ENCODE measurements at regions of chr16 and their contacts with region 1.

Region 1: GRCh38 chr16:30922960-30923535 is 324 bp upstream of the FBXL19 start:
- DNase-seq: peak; percentile 86
- ATAC-seq: peak; percentile 68
- H3K4me3 Mint-ChIP-seq: peak overlapping the region; percentile 100
- H3K27ac Mint-ChIP-seq: peak overlapping the region; percentile 100
- H3K4me1 Mint-ChIP-seq: peaks cover 20% of the 10 kb centered on the region
- H3K27me3 Mint-ChIP-seq: no peaks in the 10 kb centered on the region
- CTCF ChIP-seq: no peak

Region 2: GRCh38 chr16:30509081-30509765 is 413.8 kb before region 1 on chr16:
- CTCF ChIA-PET with region 1: no interaction called
- POLR2A ChIA-PET with region 1: interaction called, 15 read pairs
- intact Hi-C with region 1: no loop called
- DNase-seq: no peak
- ATAC-seq: no peak
- H3K4me3 Mint-ChIP-seq: no peak overlapping the region
- H3K27ac Mint-ChIP-seq: no peak overlapping the region
- H3K4me1 Mint-ChIP-seq: no peaks in the 10 kb centered on the region
- H3K27me3 Mint-ChIP-seq: no peaks in the 10 kb centered on the region
- CTCF ChIP-seq: no peak

Region 3: DNA sequence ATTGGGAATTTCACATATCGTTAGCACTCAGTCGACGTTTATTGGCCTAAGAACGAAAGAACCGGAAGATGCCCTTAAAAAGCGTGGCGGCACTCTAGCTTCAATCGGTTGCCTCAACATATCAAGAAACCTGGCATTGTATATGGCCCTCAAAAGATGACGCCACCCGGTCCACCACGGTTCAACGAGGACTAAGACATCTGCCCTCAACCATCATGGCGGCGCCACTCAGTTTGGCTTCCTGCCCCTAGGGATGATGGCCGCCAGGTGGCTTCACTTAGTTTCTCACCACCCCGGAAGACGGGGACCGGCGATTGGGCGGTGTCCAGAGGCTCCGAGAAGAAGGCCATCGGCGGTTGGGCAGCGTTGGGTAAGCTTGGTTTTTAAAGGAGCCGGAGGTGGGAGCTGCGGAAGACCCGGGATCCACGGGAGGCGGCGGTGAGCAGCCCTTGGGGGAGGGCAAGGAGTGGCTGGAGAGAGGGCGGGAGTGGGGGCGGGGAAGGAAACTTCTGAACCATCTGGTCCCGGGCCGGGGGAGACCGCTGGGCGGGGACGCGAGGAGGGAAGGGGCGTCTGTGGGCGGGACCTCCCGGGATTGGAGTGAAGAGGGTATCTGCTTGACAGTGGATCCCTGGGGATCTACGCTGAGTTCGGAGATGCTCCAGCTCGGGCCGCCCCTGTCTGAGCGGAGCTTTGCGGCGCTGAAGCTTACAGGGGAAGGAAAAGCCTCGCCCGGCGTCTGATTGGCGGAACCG is 272.5 kb before region 1 on chr16 and contains the start of gene PRR14:
- CTCF ChIA-PET with region 1: no interaction called
- POLR2A ChIA-PET with region 1: no interaction called
- intact Hi-C with region 1: loop called (anchors 1 kb)
- DNase-seq: peak; percentile 90
- ATAC-seq: peak; percentile 72
- H3K4me3 Mint-ChIP-seq: peak within 1 kb of the TSS; percentile 96
- H3K27ac Mint-ChIP-seq: peak within 1 kb of the TSS; percentile 95
- H3K4me1 Mint-ChIP-seq: peaks cover 24% of the 10 kb centered on the region
- H3K27me3 Mint-ChIP-seq: no peaks in the 10 kb centered on the region
- CTCF ChIP-seq: no peak
- total RNA-seq, gene PRR14: 63.5 and 77.9 TPM in 2 replicates

Region 4: DNA sequence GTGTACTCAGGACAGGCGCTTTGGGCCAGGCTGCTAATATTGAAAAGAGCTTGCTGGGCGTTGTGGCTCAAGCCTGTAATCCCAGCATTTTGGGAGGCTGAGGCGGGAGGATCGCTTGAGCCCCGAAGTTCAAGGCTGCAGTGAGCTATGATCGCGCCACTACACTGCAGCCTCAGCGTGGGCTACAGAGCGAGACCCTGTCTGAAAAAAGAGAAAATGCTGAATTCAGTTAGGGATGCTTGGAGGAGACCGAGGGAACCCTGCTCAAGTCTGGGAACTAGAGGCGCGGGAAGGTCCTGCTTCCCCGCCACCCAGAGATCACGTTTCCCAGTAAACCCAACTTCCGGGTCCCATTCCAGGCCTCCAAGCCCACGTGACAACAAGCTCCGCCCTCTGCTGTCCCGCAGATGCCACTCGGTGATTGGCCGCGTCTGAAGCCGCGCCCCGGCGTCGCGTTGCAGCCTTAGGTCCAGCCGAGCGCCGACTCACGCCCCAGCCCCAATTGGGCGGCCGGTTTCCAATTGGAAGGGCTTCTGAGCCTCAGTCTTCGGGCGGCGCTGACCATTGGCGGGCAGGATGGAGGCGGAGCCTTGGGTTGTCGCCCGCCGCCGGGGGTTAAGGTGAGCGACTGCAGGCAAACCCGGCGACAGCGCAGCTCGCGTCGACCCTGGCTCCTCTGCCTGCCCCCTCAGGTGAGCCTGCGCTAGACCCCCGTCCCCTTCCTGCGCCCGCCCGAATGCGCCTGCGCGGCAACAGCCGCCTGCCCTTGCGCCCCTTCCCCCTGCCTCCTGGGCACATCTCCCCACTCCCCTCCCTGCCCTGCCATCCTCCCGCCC is 175.0 kb before region 1 on chr16 and contains the start of gene PHKG2:
- CTCF ChIA-PET with region 1: no interaction called
- POLR2A ChIA-PET with region 1: no interaction called
- intact Hi-C with region 1: loop called (anchors 1 kb)
- DNase-seq: peak; percentile 90
- ATAC-seq: peak; percentile 98
- H3K4me3 Mint-ChIP-seq: peak within 1 kb of the TSS; percentile 91
- H3K27ac Mint-ChIP-seq: peak within 1 kb of the TSS; percentile 87
- H3K4me1 Mint-ChIP-seq: peaks cover 24% of the 10 kb centered on the region
- H3K27me3 Mint-ChIP-seq: no peaks in the 10 kb centered on the region
- CTCF ChIP-seq: no peak
- total RNA-seq, gene PHKG2: 45.3 and 51.4 TPM in 2 replicates

Region 5: GRCh38 chr16:30893744-30894539 is 29.1 kb before region 1 on chr16 and contains the start of gene BCL7C:
- CTCF ChIA-PET with region 1: no interaction called
- POLR2A ChIA-PET with region 1: interaction called, 4 read pairs
- intact Hi-C with region 1: loop called (anchors 1 kb)
- DNase-seq: peak; percentile 86
- ATAC-seq: peak; percentile 76
- H3K4me3 Mint-ChIP-seq: peak within 1 kb of the TSS; percentile 84
- H3K27ac Mint-ChIP-seq: peak within 1 kb of the TSS; percentile 88
- H3K4me1 Mint-ChIP-seq: peaks cover 48% of the 10 kb centered on the region
- H3K27me3 Mint-ChIP-seq: no peaks in the 10 kb centered on the region
- CTCF ChIP-seq: no peak
- total RNA-seq, gene BCL7C: 32.2 and 35.7 TPM in 2 replicates

Region 6: GRCh38 chr16:30957456-30958174 is 34.6 kb after region 1 on chr16 and contains the start of gene SETD1A:
- CTCF ChIA-PET with region 1: no interaction called
- POLR2A ChIA-PET with region 1: interaction called, 4 read pairs
- intact Hi-C with region 1: loop called (anchors 1 kb)
- DNase-seq: peak; percentile 89
- ATAC-seq: peak; percentile 87
- H3K4me3 Mint-ChIP-seq: peak within 1 kb of the TSS; percentile 95
- H3K27ac Mint-ChIP-seq: peak within 1 kb of the TSS; percentile 99
- H3K4me1 Mint-ChIP-seq: peaks cover 31% of the 10 kb centered on the region
- H3K27me3 Mint-ChIP-seq: no peaks in the 10 kb centered on the region
- CTCF ChIP-seq: no peak
- total RNA-seq, gene SETD1A: 29.6 and 32.8 TPM in 2 replicates

Region 7: DNA sequence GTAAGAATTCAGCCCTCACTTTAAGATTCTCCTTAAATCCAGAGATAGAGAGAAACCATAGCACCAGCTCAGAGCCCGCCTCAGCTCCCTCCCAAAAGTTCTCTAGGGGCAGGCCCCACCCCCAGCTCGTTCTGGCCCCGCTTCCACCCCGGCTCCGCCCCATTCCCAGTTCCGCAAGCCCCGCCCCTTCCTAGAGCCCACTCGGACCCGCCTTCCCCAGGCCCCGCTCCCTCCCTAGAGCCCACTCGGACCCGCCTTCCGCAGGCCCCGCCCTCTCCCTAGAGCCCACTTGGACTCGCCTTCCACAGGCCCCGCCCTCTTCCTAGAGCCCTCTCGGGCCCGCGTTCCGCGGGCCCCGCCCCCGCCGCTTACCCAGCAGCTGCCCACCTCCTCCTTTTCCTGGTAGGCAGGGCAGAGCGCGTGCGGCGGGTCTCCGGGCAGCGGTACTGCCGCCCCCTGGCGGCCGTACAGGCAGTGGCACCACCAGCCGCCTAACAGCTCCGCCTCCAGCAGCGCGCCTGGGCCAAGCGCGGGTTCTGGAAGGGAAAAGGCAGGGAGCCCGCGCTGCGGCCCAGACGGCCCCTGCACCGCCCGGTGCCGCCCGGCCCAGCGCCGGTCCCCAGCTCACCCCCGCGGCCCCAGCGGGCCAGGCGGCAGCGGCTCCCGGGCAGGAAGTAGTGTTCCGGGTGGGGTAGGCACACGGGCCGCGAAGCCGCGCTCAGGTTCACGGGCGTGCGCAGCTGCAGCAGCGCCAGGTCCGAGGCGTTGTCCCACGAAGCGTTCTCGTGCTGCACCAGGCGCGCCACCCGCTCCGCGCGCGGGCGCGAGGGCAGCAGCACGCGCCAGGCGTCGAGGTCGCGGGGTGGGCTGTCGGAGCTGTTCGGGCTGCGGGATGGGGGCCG is 219.3 kb after region 1 on chr16:
- CTCF ChIA-PET with region 1: no interaction called
- POLR2A ChIA-PET with region 1: no interaction called
- intact Hi-C with region 1: loop called (anchors 1 kb)
- DNase-seq: peak; percentile 97
- ATAC-seq: peak; percentile 96
- H3K4me3 Mint-ChIP-seq: peak overlapping the region; percentile 65
- H3K27ac Mint-ChIP-seq: peak overlapping the region; percentile 80
- H3K4me1 Mint-ChIP-seq: peaks cover 12% of the 10 kb centered on the region
- H3K27me3 Mint-ChIP-seq: peaks cover 5% of the 10 kb centered on the region
- CTCF ChIP-seq: no peak

Region 8: DNA sequence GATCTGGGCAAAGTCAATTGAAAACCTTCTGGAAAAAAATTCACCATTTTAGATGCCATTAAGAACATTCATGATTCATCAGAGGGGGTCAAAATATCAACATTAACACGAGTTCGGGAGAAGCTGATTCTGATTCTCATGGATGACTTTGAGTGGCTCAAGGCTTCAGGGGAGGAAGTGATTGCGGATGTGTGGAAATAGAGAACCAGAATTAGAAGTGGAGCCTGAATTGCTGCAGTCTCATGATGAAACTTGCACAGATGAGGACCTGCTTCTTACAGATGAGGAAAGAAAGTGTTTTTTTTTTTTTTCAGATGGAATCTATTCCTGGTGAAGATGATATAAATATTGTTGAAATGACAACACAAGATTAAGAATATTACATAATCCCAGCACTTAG is 444.8 kb after region 1 on chr16:
- CTCF ChIA-PET with region 1: no interaction called
- POLR2A ChIA-PET with region 1: no interaction called
- intact Hi-C with region 1: no loop called
- DNase-seq: no peak
- ATAC-seq: no peak
- H3K4me3 Mint-ChIP-seq: no peak overlapping the region
- H3K27ac Mint-ChIP-seq: no peak overlapping the region
- H3K4me1 Mint-ChIP-seq: peaks cover 13% of the 10 kb centered on the region
- H3K27me3 Mint-ChIP-seq: peaks cover 2% of the 10 kb centered on the region
- CTCF ChIP-seq: no peak

Measured in activated B cell treated with CpG ODN at 0.5 μM for 24 hours (primary cell).